ENCODE measurements at regions of chr1 and their contacts with region 1.

Region 1: DNA sequence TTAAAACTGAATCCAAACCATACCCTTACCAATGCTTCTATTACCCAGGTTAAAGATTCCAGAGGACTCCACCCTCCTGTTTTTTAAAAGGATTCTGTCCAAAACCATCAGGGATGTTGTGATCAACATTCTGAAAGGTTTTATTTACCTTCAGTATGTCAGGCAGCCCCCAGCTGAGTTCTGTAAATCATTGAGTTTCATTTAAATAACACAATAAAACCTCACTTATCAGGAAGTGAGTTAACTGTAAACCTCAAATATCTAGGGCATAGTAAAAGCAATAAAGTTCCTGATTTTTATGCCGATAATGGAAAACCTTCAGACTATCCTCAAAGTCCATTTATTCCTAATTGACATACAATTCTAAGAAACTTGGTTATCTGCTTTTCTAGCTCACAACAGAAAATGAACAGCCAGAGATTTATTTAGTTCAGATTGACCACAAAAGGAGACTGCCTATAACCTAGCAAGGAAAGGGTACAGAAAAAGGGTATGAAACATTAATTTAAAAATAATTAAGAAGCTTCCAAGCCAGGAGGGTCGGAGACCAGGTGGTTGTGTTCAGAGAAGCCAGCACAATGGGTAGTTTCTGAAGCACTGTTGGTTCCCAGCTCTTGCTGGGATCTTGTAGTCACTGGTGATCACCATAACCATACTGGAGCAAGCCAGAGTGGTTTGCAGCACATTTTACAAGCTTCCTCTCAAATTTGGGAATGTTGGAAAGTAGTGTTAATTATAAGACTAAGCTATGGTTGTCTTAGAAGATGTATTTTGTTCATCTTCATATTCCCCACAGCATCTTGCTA is 336.4 kb upstream of the FMN2 start:
- DNase-seq: no peak
- ATAC-seq: no peak
- H3K4me3 ChIP-seq: no peak overlapping the region
- H3K4me3 Mint-ChIP-seq: no peak overlapping the region
- H3K27ac ChIP-seq: no peak overlapping the region
- H3K27ac Mint-ChIP-seq: no peak overlapping the region
- H3K4me1 ChIP-seq: no peaks in the 10 kb centered on the region
- H3K4me1 Mint-ChIP-seq: peaks cover 0 to 2% (median 0%) of the 10 kb centered on the region in 3 donors
- H3K27me3 ChIP-seq: no peaks in the 10 kb centered on the region
- H3K27me3 Mint-ChIP-seq: no peaks in the 10 kb centered on the region

Region 2: GRCh38 chr1:239686386-239686785 is 68.9 kb before region 1 on chr1:
- CTCF ChIA-PET with region 1: no interaction called
- POLR2A ChIA-PET with region 1: interaction called in 1 of 2 experiments, 13 read pairs
- DNase-seq: no peak
- ATAC-seq: no peak
- H3K4me3 ChIP-seq: no peak overlapping the region
- H3K4me3 Mint-ChIP-seq: no peak overlapping the region
- H3K27ac ChIP-seq: no peak overlapping the region
- H3K27ac Mint-ChIP-seq: no peak overlapping the region
- H3K4me1 ChIP-seq: no peaks in the 10 kb centered on the region
- H3K4me1 Mint-ChIP-seq: no peaks in the 10 kb centered on the region
- H3K27me3 ChIP-seq: no peaks in the 10 kb centered on the region
- H3K27me3 Mint-ChIP-seq: no peaks in the 10 kb centered on the region

Region 3: DNA sequence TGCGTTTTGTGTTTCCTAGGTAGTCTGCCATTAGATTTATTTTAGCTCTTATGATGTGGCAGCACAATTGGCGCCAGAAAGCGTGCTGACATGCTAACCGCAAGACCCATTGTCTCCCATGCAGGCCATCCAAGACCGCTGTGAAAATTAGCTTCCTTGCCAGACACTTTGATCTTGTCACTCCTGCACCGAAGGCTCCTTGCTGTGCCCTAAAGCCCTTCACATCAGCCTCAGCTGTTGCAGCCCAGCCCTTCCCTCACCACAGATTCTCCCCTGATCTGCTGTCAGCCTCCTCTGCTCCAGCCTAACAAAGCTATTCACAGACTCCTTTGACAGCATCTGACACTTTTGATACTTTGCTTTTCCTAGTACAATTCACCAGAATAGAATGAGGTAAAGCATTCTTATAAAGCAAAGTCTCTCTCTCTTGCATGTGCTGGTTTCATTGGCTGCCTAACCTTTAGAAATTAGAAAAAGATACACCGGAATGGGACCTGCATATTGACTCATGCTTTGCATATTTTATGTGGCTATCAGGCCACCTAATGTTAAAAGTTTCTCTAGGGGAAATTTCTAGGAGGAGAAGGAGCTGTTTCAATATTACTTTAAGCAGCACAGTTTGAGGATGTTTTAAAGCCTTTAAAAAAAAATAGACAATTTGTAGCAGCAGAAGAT is 56.0 kb after region 1 on chr1:
- CTCF ChIA-PET with region 1: no interaction called
- POLR2A ChIA-PET with region 1: no interaction called
- DNase-seq: peak in 4 of 35 experiments; percentile 1 to 33 (median 6)
- ATAC-seq: peak in 3 of 4 experiments; percentile 33 to 62 (median 55)
- H3K4me3 ChIP-seq: no peak overlapping the region
- H3K4me3 Mint-ChIP-seq: no peak overlapping the region
- H3K27ac ChIP-seq: no peak overlapping the region
- H3K27ac Mint-ChIP-seq: peak overlapping the region in 1 of 2 donors; percentile 39
- H3K4me1 ChIP-seq: peaks cover 0 to 15% of the 10 kb centered on the region in 2 experiments
- H3K4me1 Mint-ChIP-seq: peaks cover 16 to 37% (median 33%) of the 10 kb centered on the region in 3 donors
- H3K27me3 ChIP-seq: no peaks in the 10 kb centered on the region
- H3K27me3 Mint-ChIP-seq: no peaks in the 10 kb centered on the region